ENCODE measurements at regions of chr9 and their contacts with region 1.

Region 1: GRCh38 chr9:613771-614347 is 227.6 kb upstream of the DMRT1 start:
- DNase-seq: peak; percentile 85 to 93
- H3K4me3 ChIP-seq: no peak overlapping the region
- H3K27ac ChIP-seq: peak overlapping the region; percentile 71 to 77
- H3K4me1 ChIP-seq: peaks cover 0 to 30% (median 19%) of the 10 kb centered on the region in 4 donors
- H3K27me3 ChIP-seq: no peaks in the 10 kb centered on the region
- CTCF ChIP-seq: peak; percentile 90 to 91

Region 2: GRCh38 chr9:706606-707459 is 93.0 kb after region 1 on chr9:
- intact Hi-C with region 1: no loop called
- DNase-seq: peak; percentile 84 to 91
- H3K4me3 ChIP-seq: peak overlapping the region; percentile 69 to 72
- H3K27ac ChIP-seq: peak overlapping the region; percentile 84 to 87
- H3K4me1 ChIP-seq: peaks cover 0 to 79% (median 36%) of the 10 kb centered on the region in 4 donors
- H3K27me3 ChIP-seq: no peaks in the 10 kb centered on the region
- CTCF ChIP-seq: no peak

Region 3: GRCh38 chr9:763692-764524 is 150.0 kb after region 1 on chr9:
- intact Hi-C with region 1: loop called (anchors 5 kb)
- DNase-seq: peak; percentile 60 to 77
- H3K4me3 ChIP-seq: peak overlapping the region in 1 of 2 donors; percentile 23
- H3K27ac ChIP-seq: no peak overlapping the region
- H3K4me1 ChIP-seq: peaks cover 0 to 16% (median 6%) of the 10 kb centered on the region in 4 donors
- H3K27me3 ChIP-seq: no peaks in the 10 kb centered on the region
- CTCF ChIP-seq: peak; percentile 90

Region 4: GRCh38 chr9:806285-807156 is 192.7 kb after region 1 on chr9:
- intact Hi-C with region 1: loop called (anchors 2 kb)
- DNase-seq: no peak
- H3K4me3 ChIP-seq: no peak overlapping the region
- H3K27ac ChIP-seq: no peak overlapping the region
- H3K4me1 ChIP-seq: no peaks in the 10 kb centered on the region
- H3K27me3 ChIP-seq: no peaks in the 10 kb centered on the region
- CTCF ChIP-seq: peak; percentile 70 to 80

Region 5: GRCh38 chr9:1009101-1009707 is 395.3 kb after region 1 on chr9:
- intact Hi-C with region 1: loop called (anchors 5 kb)
- DNase-seq: peak; percentile 66 to 84
- H3K4me3 ChIP-seq: no peak overlapping the region
- H3K27ac ChIP-seq: no peak overlapping the region
- H3K4me1 ChIP-seq: peaks cover 0 to 5% (median 0%) of the 10 kb centered on the region in 4 donors
- H3K27me3 ChIP-seq: peaks cover 0 to 21% of the 10 kb centered on the region in 2 donors
- CTCF ChIP-seq: peak; percentile 78 to 87